PC-3 (cell line): ENCODE measurements at regions of chr17 and their contacts with region 1.

Region 1: DNA sequence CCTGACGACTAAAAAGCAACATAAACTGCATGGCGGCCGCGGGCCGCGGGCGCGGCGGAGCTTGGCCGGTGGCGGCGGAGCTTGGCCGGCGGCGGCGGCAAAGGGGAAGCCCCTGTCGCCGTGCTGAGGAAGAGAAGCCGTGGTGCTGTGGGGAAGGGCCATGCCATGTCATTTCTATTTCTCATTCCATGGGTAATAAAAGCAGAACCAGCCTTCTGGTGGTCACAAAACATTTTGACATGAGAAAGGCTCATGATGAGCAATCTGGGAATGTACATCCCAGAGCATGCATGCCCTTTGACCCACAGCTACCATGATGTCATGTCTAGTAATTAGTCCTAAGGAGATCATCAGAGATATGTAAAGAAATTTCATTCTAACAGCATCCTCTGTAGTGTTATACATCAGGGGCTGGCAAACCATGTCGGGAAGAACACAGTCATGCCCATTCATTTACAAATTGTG is 23.9 kb upstream of the HEATR6 start:
- DNase-seq: no peak
- ATAC-seq: no peak
- H3K4me3 ChIP-seq: no peak overlapping the region
- H3K27ac ChIP-seq: no peak overlapping the region
- H3K4me1 ChIP-seq: peaks cover 4% of the 10 kb centered on the region; the same call in 1 of the 2 replicates
- H3K27me3 ChIP-seq: no peaks in the 10 kb centered on the region
- CTCF ChIP-seq: no peak

Region 2: DNA sequence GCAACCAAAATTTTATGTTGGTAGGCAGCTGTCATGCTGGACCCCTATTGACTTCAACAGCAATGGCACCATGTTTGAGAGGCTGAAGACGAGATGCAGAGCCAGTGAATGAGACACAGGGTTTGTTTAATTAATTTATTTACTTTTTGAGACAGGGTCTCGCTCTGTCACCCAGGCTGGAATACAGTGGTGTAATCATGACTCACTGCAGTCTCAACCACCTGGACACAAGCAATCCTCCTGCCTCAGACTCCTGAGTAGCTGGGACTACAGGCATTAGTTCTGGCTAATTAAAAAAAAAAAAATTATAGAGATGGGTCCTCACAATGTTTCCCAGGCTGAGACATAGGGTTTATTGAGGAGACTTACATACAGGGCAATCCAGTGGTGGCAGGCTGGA is 461.1 kb after region 1 on chr17:
- CTCF ChIA-PET with region 1: no interaction called
- POLR2A ChIA-PET with region 1: no interaction called
- intact Hi-C with region 1: loop called (anchors 10 kb)
- DNase-seq: peak; percentile 68
- ATAC-seq: peak; percentile 74
- H3K4me3 ChIP-seq: no peak overlapping the region
- H3K27ac ChIP-seq: no peak overlapping the region
- H3K4me1 ChIP-seq: peaks cover 7% of the 10 kb centered on the region; the same call in 1 of the 2 replicates
- H3K27me3 ChIP-seq: no peaks in the 10 kb centered on the region
- CTCF ChIP-seq: no peak